ENCODE measurements at regions of chr5 and their contacts with region 1.

Region 1: GRCh38 chr5:82894716-82895115 is 182.5 kb downstream of the TMEM167A start:
- DNase-seq: no peak
- ATAC-seq: no peak

Region 2: GRCh38 chr5:82905986-82906385 is 11.3 kb after region 1 on chr5:
- intact Hi-C with region 1: loop called (anchors 1 kb)
- DNase-seq: no peak
- ATAC-seq: no peak

Region 3: DNA sequence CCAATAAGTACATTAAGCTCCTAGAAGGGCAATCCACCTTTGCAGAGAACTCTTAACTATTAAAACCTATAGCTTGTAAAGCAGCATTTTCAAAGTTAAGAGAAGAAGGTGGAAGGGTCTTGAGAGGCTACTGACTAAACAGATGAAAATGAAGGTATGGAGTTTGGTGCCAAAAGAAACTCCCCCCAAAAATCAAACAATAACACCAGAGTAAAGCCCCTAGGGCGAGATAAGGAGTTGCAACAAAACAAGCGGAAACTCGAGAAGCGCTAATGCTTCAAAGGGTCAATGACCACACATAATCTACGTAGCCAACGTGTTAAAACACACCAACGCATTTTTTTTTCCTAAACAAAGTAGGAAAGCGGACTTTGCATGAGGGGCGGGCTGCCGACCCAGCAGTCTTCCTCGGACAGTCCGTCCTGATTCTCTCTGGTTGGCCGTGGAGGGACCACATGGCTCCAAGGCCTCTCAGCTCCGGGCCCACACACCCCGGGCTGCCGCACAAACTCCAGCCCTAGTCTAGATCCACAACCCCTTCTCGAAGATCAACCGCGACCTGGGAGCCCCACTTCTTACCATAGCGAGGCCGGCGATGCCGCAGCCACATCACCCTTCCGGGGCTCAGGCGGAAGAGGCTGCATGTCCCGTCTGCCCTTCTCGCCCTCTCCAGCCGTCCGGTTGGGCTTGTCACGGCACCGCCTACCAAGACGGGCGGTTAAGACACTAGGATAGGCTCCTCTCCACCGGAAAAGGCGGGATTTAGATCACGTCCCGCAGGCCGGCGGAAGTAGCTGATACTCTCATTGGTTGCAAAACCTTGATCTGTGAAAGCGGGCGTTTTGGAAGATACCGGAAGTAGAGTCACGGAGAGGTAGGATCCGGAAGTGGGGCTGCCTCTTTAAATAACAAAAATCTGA is 182.3 kb after region 1 on chr5 and contains the starts of genes TMEM167A and XRCC4:
- intact Hi-C with region 1: no loop called
- DNase-seq: peak; percentile 98
- ATAC-seq: peak; percentile 100
- total RNA-seq, gene TMEM167A: 53.9 TPM
- total RNA-seq, gene XRCC4: 7.9 TPM

Measured in Right ventricle myocardium inferior (tissue), 1 donor.